Vagina (tissue), 2 donors: ENCODE measurements at regions of chr15 and their contacts with region 1.

Region 1: GRCh38 chr15:84824260-84825007 is 7.3 kb downstream of the ALPK3 start:
- DNase-seq: no peak
- H3K4me3 ChIP-seq: no peak overlapping the region
- H3K27ac ChIP-seq: peak overlapping the region; percentile 59
- H3K4me1 ChIP-seq: peaks cover 51% of the 10 kb centered on the region
- H3K27me3 ChIP-seq: no peaks in the 10 kb centered on the region
- CTCF ChIP-seq: no peak
- POLR2A ChIP-seq: no peak

Region 2: GRCh38 chr15:84778194-84778593 is 46.2 kb before region 1 on chr15:
- intact Hi-C with region 1: loop called (anchors 2 kb)
- DNase-seq: no peak
- H3K4me3 ChIP-seq: no peak overlapping the region
- H3K27ac ChIP-seq: no peak overlapping the region
- H3K4me1 ChIP-seq: peaks cover 11% of the 10 kb centered on the region
- H3K27me3 ChIP-seq: no peaks in the 10 kb centered on the region
- CTCF ChIP-seq: no peak
- POLR2A ChIP-seq: no peak

Region 3: DNA sequence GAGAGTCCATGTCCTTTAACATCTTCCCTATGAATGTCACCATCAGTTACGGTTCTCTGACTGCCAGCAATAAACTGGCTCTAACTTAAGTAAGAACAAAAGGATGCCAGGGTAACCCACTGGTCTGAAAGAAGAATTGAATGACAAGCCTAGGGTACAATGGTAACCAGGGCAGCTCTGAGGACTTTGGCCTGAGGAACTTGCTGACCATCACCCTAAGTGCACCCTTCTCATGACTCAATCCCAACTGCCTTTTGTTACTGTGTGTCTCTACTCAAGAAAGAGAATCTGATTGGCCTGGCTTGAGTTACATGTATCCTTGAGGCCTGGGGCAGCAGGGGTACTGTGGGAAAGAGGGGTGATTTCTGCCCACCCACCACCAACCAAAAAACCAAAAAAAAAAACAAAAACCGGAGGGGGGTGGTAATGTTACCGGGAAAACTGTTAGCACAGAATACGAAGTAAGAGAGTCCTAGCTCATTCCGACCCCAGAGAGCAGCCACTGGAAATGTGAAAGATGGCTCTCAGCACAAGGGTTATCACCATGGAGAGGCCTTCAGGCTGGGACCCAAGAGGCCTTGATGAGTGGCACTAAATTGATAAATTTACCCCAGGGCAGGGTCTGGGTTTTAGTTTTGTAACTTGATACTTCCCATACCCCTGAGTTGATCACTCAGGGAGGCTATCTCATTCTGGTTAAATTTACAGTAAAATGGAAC is 50.7 kb after region 1 on chr15:
- intact Hi-C with region 1: no loop called
- DNase-seq: no peak
- H3K4me3 ChIP-seq: no peak overlapping the region
- H3K27ac ChIP-seq: peak overlapping the region; percentile 40
- H3K4me1 ChIP-seq: no peaks in the 10 kb centered on the region
- H3K27me3 ChIP-seq: no peaks in the 10 kb centered on the region
- CTCF ChIP-seq: no peak
- POLR2A ChIP-seq: no peak